Activated T-helper 1 cell treated with anti-CD3 and anti-CD28 coated beads, Interleukin-12 subunit alpha, Interleukin-12 subunit beta, Interleukin-2, Interleukin-4 antibody, amounts not matched to agents 30 ng/mL and 10 ng/mL and 1 ng/mL, durations not matched to agents 14 hours and 24 hours and 36 hours (primary cell): ENCODE measurements at regions of chr3 and their contacts with region 1.

Region 1: GRCh38 chr3:29353807-29354206 is 72.9 kb downstream of the RBMS3 start:
- DNase-seq: no peak
- H3K4me3 Mint-ChIP-seq: no peak overlapping the region
- H3K27ac Mint-ChIP-seq: no peak overlapping the region
- H3K4me1 Mint-ChIP-seq: peaks cover 17% of the 10 kb centered on the region
- H3K27me3 Mint-ChIP-seq: no peaks in the 10 kb centered on the region

Region 2: DNA sequence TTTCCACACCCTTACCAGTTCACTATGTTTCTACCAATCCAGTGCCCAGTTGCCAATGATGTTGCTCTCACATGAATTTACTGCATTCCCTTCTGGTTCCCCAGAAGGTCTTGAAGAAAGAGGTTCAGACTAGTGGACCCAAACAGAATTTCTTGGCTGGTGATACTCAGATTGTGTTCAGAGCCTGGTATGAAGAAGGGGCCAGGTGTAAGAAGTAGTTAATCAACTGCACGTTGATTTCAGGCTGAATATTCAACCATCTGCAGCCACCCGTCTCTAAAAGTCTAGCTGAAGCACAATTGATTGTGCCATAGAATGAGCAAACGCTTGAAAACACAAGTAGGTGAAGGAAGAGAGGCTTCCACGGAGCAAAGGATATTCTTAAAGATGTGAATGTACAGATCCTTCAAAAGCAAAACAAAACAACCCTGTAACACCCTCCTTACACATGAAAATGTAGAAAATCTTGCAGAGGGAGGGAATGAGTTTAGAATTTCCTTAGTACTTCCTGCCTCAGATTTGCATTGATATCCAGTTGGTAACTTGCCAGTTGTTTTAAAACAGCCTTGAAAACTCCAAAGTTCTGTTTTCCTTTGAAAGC is 68.2 kb before region 1 on chr3:
- intact Hi-C with region 1: loop called (anchors 2 kb)
- DNase-seq: no peak
- H3K4me3 Mint-ChIP-seq: peak overlapping the region; percentile 37
- H3K27ac Mint-ChIP-seq: peak overlapping the region; percentile 19
- H3K4me1 Mint-ChIP-seq: peaks cover 53% of the 10 kb centered on the region
- H3K27me3 Mint-ChIP-seq: peaks cover 3% of the 10 kb centered on the region

Region 3: GRCh38 chr3:29525254-29525881 is 171.6 kb after region 1 on chr3:
- intact Hi-C with region 1: no loop called
- DNase-seq: no peak
- H3K4me3 Mint-ChIP-seq: no peak overlapping the region
- H3K27ac Mint-ChIP-seq: no peak overlapping the region
- H3K4me1 Mint-ChIP-seq: no peaks in the 10 kb centered on the region
- H3K27me3 Mint-ChIP-seq: peaks cover 1% of the 10 kb centered on the region